HCT116 (cell line): ENCODE measurements at regions of chr16 and their contacts with region 1.

Region 1: GRCh38 chr16:75198135-75198600 is 8.8 kb downstream of the CTRB2 start:
- DNase-seq: no peak
- ATAC-seq: no peak
- H3K4me3 ChIP-seq: no peak overlapping the region
- H3K27ac ChIP-seq: no peak overlapping the region
- H3K4me1 ChIP-seq: peaks cover 0 to 4% of the 10 kb centered on the region in 2 experiments; a peak in 1 of 4 replicates
- H3K27me3 ChIP-seq: no peaks in the 10 kb centered on the region; the same call in 1 of the 2 replicates
- CTCF ChIP-seq: no peak
- POLR2A ChIP-seq: no peak
- RAD21 ChIP-seq: no peak

Region 2: DNA sequence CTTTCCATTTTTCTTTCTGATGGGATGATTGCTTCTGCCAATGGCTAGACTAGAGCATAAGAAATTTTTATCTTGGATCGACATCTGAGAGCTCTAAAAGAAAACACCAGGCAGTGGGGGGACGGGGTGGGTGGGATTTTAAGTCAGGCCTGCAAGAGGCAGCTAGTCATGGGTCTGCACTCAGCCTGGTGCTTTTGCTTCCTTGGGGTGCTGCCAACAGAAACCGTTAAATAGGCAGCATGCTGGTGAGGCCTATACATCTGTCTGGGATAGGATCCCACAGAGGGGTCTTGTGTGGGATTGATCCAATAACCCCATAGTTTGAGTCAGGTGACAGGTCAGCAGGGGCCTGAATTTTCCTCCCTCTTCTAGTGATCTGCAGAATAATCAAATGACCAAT is 172.4 kb before region 1 on chr16:
- CTCF ChIA-PET with region 1: no interaction called
- POLR2A ChIA-PET with region 1: no interaction called
- RAD21 ChIA-PET with region 1: no interaction called
- intact Hi-C with region 1: no loop called
- DNase-seq: no peak
- ATAC-seq: no peak
- H3K4me3 ChIP-seq: no peak overlapping the region
- H3K27ac ChIP-seq: no peak overlapping the region
- H3K4me1 ChIP-seq: peaks cover 36 to 56% of the 10 kb centered on the region in 2 experiments
- H3K27me3 ChIP-seq: no peaks in the 10 kb centered on the region
- CTCF ChIP-seq: no peak
- POLR2A ChIP-seq: no peak
- RAD21 ChIP-seq: no peak

Region 3: DNA sequence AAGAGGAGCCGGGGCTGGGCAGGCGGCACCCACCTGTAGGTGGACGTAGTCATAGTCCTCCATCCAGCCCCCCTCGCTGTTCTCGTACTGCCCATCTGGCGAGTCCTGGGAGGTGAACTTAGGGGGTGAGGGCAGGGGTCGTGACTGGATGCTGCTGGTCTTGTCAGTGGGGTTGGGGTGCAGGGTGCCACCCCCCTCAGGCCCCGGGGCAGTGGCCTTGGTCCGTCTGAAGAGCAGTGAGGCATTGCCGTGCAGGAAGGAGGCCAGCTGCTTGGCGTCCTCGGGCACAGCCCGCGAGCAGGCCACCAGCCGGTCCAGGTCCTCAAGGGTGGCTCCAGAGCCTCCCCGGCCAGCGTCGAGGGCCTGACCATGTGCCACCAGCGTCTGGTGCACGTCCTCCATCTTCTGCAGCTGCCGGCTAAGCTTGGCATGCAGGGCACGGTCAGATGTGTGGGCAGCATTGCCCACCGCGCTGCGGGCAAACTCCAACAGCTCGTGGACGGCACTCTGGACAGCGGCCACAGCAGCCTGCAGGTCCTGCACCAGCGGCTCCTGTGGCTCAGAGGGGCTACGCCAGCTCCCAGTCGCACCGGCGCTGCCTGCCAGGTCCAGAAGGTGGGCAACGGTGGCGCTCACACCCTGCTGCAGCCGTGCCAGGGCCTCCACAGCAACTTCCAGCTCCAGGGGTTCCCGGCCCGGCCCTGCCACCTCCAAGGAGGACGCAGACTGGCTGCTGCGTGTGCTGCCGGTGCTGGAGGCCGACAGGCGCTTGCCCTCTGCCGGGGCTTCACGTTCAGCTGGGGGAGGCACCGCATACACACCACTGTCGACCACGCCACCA is 36.9 kb after region 1 on chr16:
- CTCF ChIA-PET with region 1: interaction called, 11 read pairs
- POLR2A ChIA-PET with region 1: no interaction called
- RAD21 ChIA-PET with region 1: no interaction called
- intact Hi-C with region 1: no loop called
- DNase-seq: no peak
- ATAC-seq: no peak
- H3K4me3 ChIP-seq: no peak overlapping the region
- H3K27ac ChIP-seq: peak overlapping the region; percentile 72
- H3K4me1 ChIP-seq: peaks cover 20 to 33% of the 10 kb centered on the region in 2 experiments
- H3K27me3 ChIP-seq: no peaks in the 10 kb centered on the region
- CTCF ChIP-seq: no peak
- POLR2A ChIP-seq: no peak
- RAD21 ChIP-seq: no peak

Region 4: GRCh38 chr16:75402821-75403475 is 204.8 kb after region 1 on chr16:
- CTCF ChIA-PET with region 1: interaction called, 25 read pairs
- POLR2A ChIA-PET with region 1: no interaction called
- RAD21 ChIA-PET with region 1: interaction called, 6 to 10 read pairs
- intact Hi-C with region 1: loop called (anchors 1 kb)
- DNase-seq: peak; percentile 10
- ATAC-seq: peak; percentile 67
- H3K4me3 ChIP-seq: no peak overlapping the region
- H3K27ac ChIP-seq: no peak overlapping the region
- H3K4me1 ChIP-seq: peaks cover 0 to 7% of the 10 kb centered on the region in 2 experiments; a peak in 1 of 4 replicates
- H3K27me3 ChIP-seq: no peaks in the 10 kb centered on the region
- CTCF ChIP-seq: peak; percentile 49 to 67 (median 65); a peak in 5 of 6 replicates
- POLR2A ChIP-seq: no peak
- RAD21 ChIP-seq: peak; percentile 69

Region 5: GRCh38 chr16:75550211-75550662 is 352.1 kb after region 1 on chr16:
- CTCF ChIA-PET with region 1: interaction called, 10 read pairs
- POLR2A ChIA-PET with region 1: no interaction called
- RAD21 ChIA-PET with region 1: no interaction called
- intact Hi-C with region 1: no loop called
- DNase-seq: no peak
- ATAC-seq: peak; percentile 38
- H3K4me3 ChIP-seq: no peak overlapping the region
- H3K27ac ChIP-seq: no peak overlapping the region
- H3K4me1 ChIP-seq: peaks cover 2 to 11% of the 10 kb centered on the region in 2 experiments; a peak in 2 of 4 replicates
- H3K27me3 ChIP-seq: no peaks in the 10 kb centered on the region
- CTCF ChIP-seq: peak; percentile 55 to 65 (median 58); a peak in 5 of 6 replicates
- POLR2A ChIP-seq: no peak
- RAD21 ChIP-seq: peak; percentile 73

Region 6: DNA sequence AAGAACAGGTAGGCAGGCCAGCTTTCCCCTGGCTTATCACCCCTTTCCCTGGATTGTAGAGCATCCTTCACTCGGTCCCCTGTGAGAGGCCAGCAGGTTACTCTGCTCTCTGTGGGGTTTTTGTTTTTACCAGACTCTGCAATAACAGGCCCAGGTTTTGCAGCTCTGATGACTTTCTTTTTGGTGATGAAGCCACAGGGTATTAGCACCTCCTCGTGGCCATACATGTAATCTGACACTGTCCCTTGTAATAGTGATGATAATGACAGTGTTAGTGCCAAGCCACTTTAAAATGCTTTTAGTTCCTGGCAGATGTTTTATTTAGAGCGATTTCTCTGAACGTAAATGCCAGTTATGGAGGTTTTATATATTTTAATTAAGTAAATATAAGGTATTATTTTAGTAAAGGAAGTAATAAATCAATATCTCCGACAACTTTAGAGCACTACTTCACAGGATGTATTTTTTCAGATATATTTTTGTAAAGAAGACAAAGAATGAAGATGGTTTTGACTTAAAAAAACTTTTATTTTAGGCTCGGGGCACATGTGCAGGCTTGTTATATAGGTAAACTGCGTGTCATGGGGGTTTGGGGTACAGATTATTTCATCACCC is 566.1 kb after region 1 on chr16:
- CTCF ChIA-PET with region 1: interaction called, 12 read pairs
- POLR2A ChIA-PET with region 1: no interaction called
- RAD21 ChIA-PET with region 1: interaction called in 1 of 2 experiments, 3 read pairs
- intact Hi-C with region 1: loop called (anchors 1 kb)
- DNase-seq: peak; percentile 60
- ATAC-seq: peak; percentile 98
- H3K4me3 ChIP-seq: no peak overlapping the region
- H3K27ac ChIP-seq: no peak overlapping the region
- H3K4me1 ChIP-seq: no peaks in the 10 kb centered on the region
- H3K27me3 ChIP-seq: peaks cover 24% of the 10 kb centered on the region
- CTCF ChIP-seq: peak; percentile 82 to 84 (median 84); a peak in 5 of 6 replicates
- POLR2A ChIP-seq: no peak
- RAD21 ChIP-seq: peak; percentile 92